Stomach (tissue), 19 donors: ENCODE measurements at regions of chr10 and their contacts with region 1.

Region 1: DNA sequence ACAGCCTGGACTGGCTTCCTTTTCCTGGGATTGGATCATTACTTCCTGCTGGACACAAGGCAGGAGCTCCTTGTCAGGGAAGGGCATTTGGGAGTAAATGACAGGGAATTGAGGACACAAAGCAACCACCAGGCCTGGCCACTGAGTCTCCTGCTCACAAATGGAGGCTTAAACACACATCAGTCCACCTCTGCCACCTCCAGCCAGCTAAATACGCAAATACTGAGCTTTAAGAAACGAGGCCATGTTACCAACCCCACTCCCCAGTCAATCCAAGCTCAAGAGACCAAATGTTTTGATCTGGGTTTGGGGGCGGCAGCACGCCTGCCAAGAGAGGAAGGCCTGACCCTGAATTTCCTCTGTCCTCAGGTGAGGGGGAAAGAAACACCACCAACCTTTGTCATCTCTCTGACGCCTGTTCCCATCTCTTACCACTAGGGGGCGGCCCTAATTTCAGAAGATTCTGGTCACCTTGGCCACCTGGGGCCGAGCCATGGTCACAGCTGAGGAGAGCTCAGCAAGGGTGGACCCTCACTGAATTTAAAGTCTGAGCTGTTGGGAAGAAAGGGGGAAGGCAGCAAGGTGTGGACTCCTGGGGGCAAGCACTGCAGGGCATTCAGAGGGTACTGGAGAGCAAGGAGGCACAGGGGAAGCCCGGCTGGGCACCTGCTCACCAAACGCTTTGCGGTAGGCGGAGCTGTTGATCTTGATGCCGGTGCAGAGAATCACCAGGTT is 16.5 kb downstream of the AIFM2 start:
- DNase-seq: peak; percentile 71 to 73
- H3K4me3 ChIP-seq: no peak overlapping the region
- H3K27ac ChIP-seq: no peak overlapping the region
- H3K4me1 ChIP-seq: no peaks in the 10 kb centered on the region
- H3K27me3 ChIP-seq: no peaks in the 10 kb centered on the region
- CTCF ChIP-seq: peak in 5 of 7 experiments; percentile 63 to 93 (median 82)
- EP300 ChIP-seq: no peak
- POLR2A ChIP-seq: no peak

Region 2: DNA sequence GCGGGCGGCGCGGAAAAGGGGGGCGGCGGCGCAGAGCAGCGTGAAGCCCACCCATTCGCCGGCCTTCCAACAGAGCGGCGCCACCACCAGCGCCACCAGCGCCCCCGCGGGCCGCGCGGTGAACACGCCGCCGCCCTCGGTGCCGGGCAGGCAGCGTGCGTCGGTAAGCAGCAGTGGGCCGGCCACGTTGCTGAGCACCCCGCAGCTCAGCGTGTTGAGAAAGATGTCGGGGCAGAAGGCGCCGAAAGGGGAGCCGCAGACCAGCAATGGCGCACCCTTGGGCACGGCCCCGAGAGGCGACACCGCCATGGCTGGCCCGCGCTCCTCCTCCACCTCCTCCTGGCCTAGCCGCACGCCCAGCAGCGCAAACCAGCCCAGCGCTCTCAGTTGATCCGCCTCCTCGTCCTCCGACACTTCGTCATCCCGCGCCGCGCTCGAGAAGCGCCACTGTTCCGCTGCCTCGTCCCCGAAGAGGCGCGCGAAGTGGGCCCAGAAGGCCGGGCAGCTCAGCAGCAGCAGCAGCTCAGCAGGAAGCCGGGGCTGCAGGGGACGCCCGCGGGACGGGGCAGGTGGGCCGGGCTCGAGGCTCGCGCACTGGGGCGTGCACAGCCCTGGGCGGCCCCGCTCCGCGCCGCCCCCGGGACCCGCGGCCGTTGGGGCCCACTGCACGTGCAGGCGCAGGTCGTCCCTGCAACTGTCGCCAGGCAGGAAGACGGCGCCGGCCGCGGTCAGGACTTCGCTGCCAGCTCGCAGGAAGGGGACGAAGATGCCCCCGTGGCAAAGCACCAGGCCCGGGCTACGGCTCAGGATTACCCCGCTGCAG is 29.8 kb after region 1 on chr10:
- intact Hi-C with region 1: loop called (anchors 2 kb)
- DNase-seq: peak; percentile 67 to 91
- H3K4me3 ChIP-seq: peak overlapping the region; percentile 57 to 88 (median 76)
- H3K27ac ChIP-seq: peak overlapping the region; percentile 84 to 95 (median 91)
- H3K4me1 ChIP-seq: peaks cover 17 to 34% (median 28%) of the 10 kb centered on the region in 4 donors
- H3K27me3 ChIP-seq: no peaks in the 10 kb centered on the region
- CTCF ChIP-seq: peak in 4 of 7 experiments; percentile 39 to 63 (median 55)
- EP300 ChIP-seq: no peak
- POLR2A ChIP-seq: no peak